ENCODE measurements at regions of chr7 and their contacts with region 1.

Region 1: GRCh38 chr7:140653319-140654108 is 12.9 kb upstream of the DENND2A start:
- DNase-seq: no peak
- H3K4me3 Mint-ChIP-seq: no peak overlapping the region
- H3K27ac Mint-ChIP-seq: no peak overlapping the region
- H3K4me1 Mint-ChIP-seq: peaks cover 20% of the 10 kb centered on the region
- H3K27me3 Mint-ChIP-seq: peaks cover 22% of the 10 kb centered on the region

Region 2: GRCh38 chr7:140517546-140518369 is 135.8 kb before region 1 on chr7:
- intact Hi-C with region 1: loop called (anchors 1 kb)
- DNase-seq: peak; percentile 47
- H3K4me3 Mint-ChIP-seq: no peak overlapping the region
- H3K27ac Mint-ChIP-seq: no peak overlapping the region
- H3K4me1 Mint-ChIP-seq: peaks cover 5% of the 10 kb centered on the region
- H3K27me3 Mint-ChIP-seq: peaks cover 2% of the 10 kb centered on the region

Measured in activated T-helper 2 cell treated with anti-CD3 and anti-CD28 coated beads, Interferon-gamma antibody, Interleukin-2, Interleukin-4, amounts not matched to agents 10 μg/mL and 5 μg/mL and 100 μg/mL, durations not matched to agents 14 hours and 24 hours and 36 hours (primary cell).